Activated T-helper 1 cell treated with anti-CD3 and anti-CD28 coated beads, Interleukin-12 subunit alpha, Interleukin-12 subunit beta, Interleukin-2, Interleukin-4 antibody, amounts not matched to agents 30 ng/mL and 10 ng/mL and 1 ng/mL, durations not matched to agents 14 hours and 24 hours and 36 hours (primary cell): ENCODE measurements at regions of chrX and their contacts with region 1.

Region 1: GRCh38 chrX:38327007-38327774 is at the start of gene RPGR:
- DNase-seq: peak; percentile 86
- H3K4me3 Mint-ChIP-seq: peak within 1 kb of the TSS; percentile 92
- H3K27ac Mint-ChIP-seq: peak within 1 kb of the TSS; percentile 96
- H3K4me1 Mint-ChIP-seq: peaks cover 8% of the 10 kb centered on the region
- H3K27me3 Mint-ChIP-seq: no peaks in the 10 kb centered on the region
- total RNA-seq, gene RPGR: 7.5 and 9.3 TPM in 2 replicates

Region 2: GRCh38 chrX:37846934-37847732 is 480.1 kb before region 1 on chrX and contains the start of gene DYNLT3:
- intact Hi-C with region 1: loop called (anchors 2 kb)
- DNase-seq: peak; percentile 75
- H3K4me3 Mint-ChIP-seq: peak within 1 kb of the TSS; percentile 80
- H3K27ac Mint-ChIP-seq: peak within 1 kb of the TSS; percentile 86
- H3K4me1 Mint-ChIP-seq: peaks cover 17% of the 10 kb centered on the region
- H3K27me3 Mint-ChIP-seq: no peaks in the 10 kb centered on the region
- total RNA-seq, gene DYNLT3: 15.3 and 16.7 TPM in 2 replicates

Region 3: GRCh38 chrX:37976153-37976552 is 351.0 kb before region 1 on chrX:
- intact Hi-C with region 1: loop called (anchors 5 kb)
- DNase-seq: no peak
- H3K4me3 Mint-ChIP-seq: no peak overlapping the region
- H3K27ac Mint-ChIP-seq: no peak overlapping the region
- H3K4me1 Mint-ChIP-seq: peaks cover 19% of the 10 kb centered on the region
- H3K27me3 Mint-ChIP-seq: no peaks in the 10 kb centered on the region

Region 4: DNA sequence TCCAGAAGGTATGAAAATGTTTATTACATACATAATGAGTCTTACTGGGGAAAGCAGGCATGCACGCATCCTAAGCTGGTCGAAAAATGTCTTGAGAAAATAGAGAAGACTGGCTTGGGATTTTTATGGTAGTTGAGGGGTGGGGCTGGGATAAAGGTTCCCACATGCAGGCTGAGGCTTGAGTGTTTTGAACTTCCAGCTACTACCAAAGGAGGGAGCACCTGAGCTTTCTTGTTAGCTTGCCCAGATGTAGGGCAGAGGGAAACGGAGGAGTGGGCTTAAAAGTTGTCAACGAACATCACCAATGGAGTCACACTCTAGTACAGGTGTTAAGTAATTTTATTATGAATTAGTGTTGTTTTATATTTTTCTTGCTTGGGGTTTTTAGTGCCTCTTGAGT is 67.0 kb before region 1 on chrX:
- intact Hi-C with region 1: loop called (anchors 2 kb)
- DNase-seq: no peak
- H3K4me3 Mint-ChIP-seq: no peak overlapping the region
- H3K27ac Mint-ChIP-seq: no peak overlapping the region
- H3K4me1 Mint-ChIP-seq: no peaks in the 10 kb centered on the region
- H3K27me3 Mint-ChIP-seq: peaks cover 2% of the 10 kb centered on the region

Region 5: GRCh38 chrX:38382663-38383062 is 55.5 kb after region 1 on chrX:
- intact Hi-C with region 1: no loop called
- DNase-seq: no peak
- H3K4me3 Mint-ChIP-seq: no peak overlapping the region
- H3K27ac Mint-ChIP-seq: no peak overlapping the region
- H3K4me1 Mint-ChIP-seq: no peaks in the 10 kb centered on the region
- H3K27me3 Mint-ChIP-seq: no peaks in the 10 kb centered on the region

Region 6: GRCh38 chrX:38426785-38427184 is 99.6 kb after region 1 on chrX:
- intact Hi-C with region 1: no loop called
- DNase-seq: no peak
- H3K4me3 Mint-ChIP-seq: no peak overlapping the region
- H3K27ac Mint-ChIP-seq: no peak overlapping the region
- H3K4me1 Mint-ChIP-seq: no peaks in the 10 kb centered on the region
- H3K27me3 Mint-ChIP-seq: no peaks in the 10 kb centered on the region

Region 7: DNA sequence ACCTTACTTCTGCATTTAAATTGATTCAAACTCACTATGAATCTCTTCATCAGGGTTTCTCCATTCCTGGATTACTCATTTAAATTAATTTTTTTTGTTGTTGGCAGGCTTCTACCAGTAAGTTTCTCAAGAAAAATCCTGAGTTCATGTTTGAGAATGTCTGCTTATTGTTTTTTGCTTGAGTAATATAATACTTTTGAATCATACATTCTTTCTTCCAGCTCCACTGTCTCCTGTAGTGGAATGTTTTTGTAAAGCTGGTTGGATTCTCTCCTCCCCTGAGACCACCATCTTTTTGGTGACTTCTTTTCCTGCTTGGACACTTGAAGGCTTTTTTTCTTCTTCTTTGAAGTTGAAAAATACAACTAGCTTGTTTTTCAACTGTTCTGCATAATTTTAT is 469.8 kb after region 1 on chrX:
- intact Hi-C with region 1: no loop called
- DNase-seq: no peak
- H3K4me3 Mint-ChIP-seq: no peak overlapping the region
- H3K27ac Mint-ChIP-seq: no peak overlapping the region
- H3K4me1 Mint-ChIP-seq: peaks cover 7% of the 10 kb centered on the region
- H3K27me3 Mint-ChIP-seq: no peaks in the 10 kb centered on the region

Region 8: GRCh38 chrX:39532761-39533160 is 1205.6 kb after region 1 on chrX:
- intact Hi-C with region 1: no loop called
- DNase-seq: no peak
- H3K4me3 Mint-ChIP-seq: no peak overlapping the region
- H3K27ac Mint-ChIP-seq: no peak overlapping the region
- H3K4me1 Mint-ChIP-seq: peaks cover 13% of the 10 kb centered on the region
- H3K27me3 Mint-ChIP-seq: peaks cover 7% of the 10 kb centered on the region